ENCODE measurements at regions of chr14 and their contacts with region 1.

Region 1: DNA sequence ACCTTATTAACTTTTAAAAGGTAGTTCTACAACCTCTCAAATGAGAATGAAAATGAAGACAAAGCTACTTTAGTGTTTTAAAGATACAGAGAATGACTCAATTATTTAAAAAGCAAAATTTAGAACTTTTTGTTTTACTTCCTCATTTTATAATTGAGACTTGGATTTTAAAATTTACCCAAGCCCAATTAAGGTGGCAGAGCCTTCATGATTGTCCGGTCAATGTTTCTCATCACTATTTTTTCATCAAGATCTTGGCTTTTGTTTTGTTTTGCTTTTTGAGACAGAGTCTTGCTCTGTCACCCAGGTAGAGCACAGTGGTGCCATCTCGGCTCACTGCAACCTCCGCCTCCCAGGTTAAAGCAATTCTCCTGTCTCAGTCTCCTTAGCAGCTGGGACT is 32.7 kb downstream of the PPP4R3A start:
- DNase-seq: no peak
- ATAC-seq: no peak
- H3K4me3 ChIP-seq: no peak overlapping the region
- H3K4me3 Mint-ChIP-seq: no peak overlapping the region
- H3K27ac ChIP-seq: no peak overlapping the region
- H3K27ac Mint-ChIP-seq: peak overlapping the region; percentile 5 to 45
- H3K4me1 ChIP-seq: peaks cover 0 to 6% of the 10 kb centered on the region in 2 experiments
- H3K4me1 Mint-ChIP-seq: peaks cover 42 to 51% (median 50%) of the 10 kb centered on the region in 3 donors
- H3K27me3 ChIP-seq: no peaks in the 10 kb centered on the region
- H3K27me3 Mint-ChIP-seq: no peaks in the 10 kb centered on the region

Region 2: GRCh38 chr14:91388551-91388975 is 88.8 kb before region 1 on chr14:
- CTCF ChIA-PET with region 1: no interaction called
- POLR2A ChIA-PET with region 1: no interaction called
- DNase-seq: peak in 10 of 35 experiments; percentile 35 to 75 (median 45)
- ATAC-seq: peak; percentile 70 to 86 (median 82)
- H3K4me3 ChIP-seq: peak overlapping the region; percentile 1 to 10
- H3K4me3 Mint-ChIP-seq: peak overlapping the region; percentile 54 to 98 (median 55)
- H3K27ac ChIP-seq: peak overlapping the region; percentile 66
- H3K27ac Mint-ChIP-seq: peak overlapping the region; percentile 81 to 86
- H3K4me1 ChIP-seq: peaks cover 42 to 100% of the 10 kb centered on the region in 2 experiments
- H3K4me1 Mint-ChIP-seq: peaks cover 88 to 94% (median 90%) of the 10 kb centered on the region in 3 donors
- H3K27me3 ChIP-seq: no peaks in the 10 kb centered on the region
- H3K27me3 Mint-ChIP-seq: no peaks in the 10 kb centered on the region

Region 3: DNA sequence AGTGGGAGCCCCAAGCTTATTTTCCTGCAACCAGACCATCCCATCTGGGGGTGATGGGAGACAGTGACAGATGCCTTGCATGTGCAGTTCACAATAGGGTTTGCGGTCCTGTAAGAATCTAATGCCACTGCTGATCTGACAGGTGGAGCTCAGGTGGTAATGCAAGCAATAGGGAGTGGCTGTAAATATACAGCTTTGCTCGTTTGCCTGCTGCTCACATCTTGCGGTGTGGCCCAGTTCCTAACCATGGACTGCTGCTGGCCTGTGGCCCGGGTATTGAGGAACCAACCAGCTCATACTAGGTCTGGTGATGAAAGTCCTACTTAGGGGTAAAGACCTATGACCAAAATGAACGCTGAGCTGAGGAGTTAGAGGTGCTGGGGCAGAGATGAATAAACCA is 23.6 kb before region 1 on chr14:
- CTCF ChIA-PET with region 1: no interaction called
- POLR2A ChIA-PET with region 1: no interaction called
- DNase-seq: no peak
- ATAC-seq: no peak
- H3K4me3 ChIP-seq: no peak overlapping the region
- H3K4me3 Mint-ChIP-seq: no peak overlapping the region
- H3K27ac ChIP-seq: no peak overlapping the region
- H3K27ac Mint-ChIP-seq: peak overlapping the region; percentile 59 to 84
- H3K4me1 ChIP-seq: peaks cover 2 to 8% of the 10 kb centered on the region in 2 experiments
- H3K4me1 Mint-ChIP-seq: peaks cover 24 to 29% (median 28%) of the 10 kb centered on the region in 3 donors
- H3K27me3 ChIP-seq: no peaks in the 10 kb centered on the region
- H3K27me3 Mint-ChIP-seq: no peaks in the 10 kb centered on the region

Region 4: DNA sequence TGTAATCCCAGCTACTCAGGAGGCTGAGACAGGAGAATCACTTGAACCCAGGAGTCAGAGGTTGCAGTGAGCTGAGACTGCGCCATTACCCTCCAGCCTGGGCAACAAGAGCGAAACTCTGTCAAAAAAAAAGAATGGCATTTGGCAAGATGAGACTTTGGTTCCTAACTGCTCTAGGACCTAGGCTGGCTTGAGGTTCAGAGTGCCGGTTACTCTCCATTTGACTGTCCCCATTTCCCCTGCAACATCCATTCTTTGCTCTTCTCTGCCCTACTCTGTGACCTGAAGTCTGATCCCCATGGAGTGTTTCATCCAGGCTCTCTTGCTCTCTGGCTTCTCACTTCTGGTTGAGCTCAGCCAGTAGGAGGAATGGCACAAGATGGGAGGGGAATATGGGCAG is 58.9 kb after region 1 on chr14:
- CTCF ChIA-PET with region 1: interaction called in 1 of 2 experiments, 6 read pairs
- POLR2A ChIA-PET with region 1: interaction called in 1 of 2 experiments, 12 read pairs
- DNase-seq: no peak
- ATAC-seq: no peak
- H3K4me3 ChIP-seq: no peak overlapping the region
- H3K4me3 Mint-ChIP-seq: no peak overlapping the region
- H3K27ac ChIP-seq: no peak overlapping the region
- H3K27ac Mint-ChIP-seq: no peak overlapping the region
- H3K4me1 ChIP-seq: no peaks in the 10 kb centered on the region
- H3K4me1 Mint-ChIP-seq: no peaks in the 10 kb centered on the region
- H3K27me3 ChIP-seq: peaks cover 0 to 3% of the 10 kb centered on the region in 2 experiments
- H3K27me3 Mint-ChIP-seq: peaks cover 11 to 17% of the 10 kb centered on the region in 2 donors

Region 5: GRCh38 chr14:91996948-91997371 is 519.6 kb after region 1 on chr14:
- CTCF ChIA-PET with region 1: no interaction called
- POLR2A ChIA-PET with region 1: no interaction called
- DNase-seq: peak in 4 of 35 experiments; percentile 2 to 68 (median 6)
- ATAC-seq: peak in 3 of 4 experiments; percentile 48 to 53 (median 52)
- H3K4me3 ChIP-seq: no peak overlapping the region
- H3K4me3 Mint-ChIP-seq: peak overlapping the region in 1 of 3 donors; percentile 15
- H3K27ac ChIP-seq: no peak overlapping the region
- H3K27ac Mint-ChIP-seq: peak overlapping the region in 1 of 2 donors; percentile 71
- H3K4me1 ChIP-seq: peaks cover 0 to 22% of the 10 kb centered on the region in 2 experiments
- H3K4me1 Mint-ChIP-seq: peaks cover 36 to 45% (median 41%) of the 10 kb centered on the region in 3 donors
- H3K27me3 ChIP-seq: no peaks in the 10 kb centered on the region
- H3K27me3 Mint-ChIP-seq: no peaks in the 10 kb centered on the region